ENCODE measurements at regions of chr3 and their contacts with region 1.

Region 1: GRCh38 chr3:175980486-175981415 is 1121.6 kb downstream of the NAALADL2 start:
- DNase-seq: no peak
- H3K4me3 ChIP-seq: no peak overlapping the region
- H3K27ac ChIP-seq: no peak overlapping the region
- H3K4me1 ChIP-seq: no peaks in the 10 kb centered on the region
- H3K27me3 ChIP-seq: no peaks in the 10 kb centered on the region
- CTCF ChIP-seq: no peak

Region 2: GRCh38 chr3:175422744-175423143 is 558.0 kb before region 1 on chr3:
- CTCF ChIA-PET with region 1: interaction called, 10 read pairs
- POLR2A ChIA-PET with region 1: no interaction called
- intact Hi-C with region 1: no loop called
- DNase-seq: no peak
- H3K4me3 ChIP-seq: no peak overlapping the region
- H3K27ac ChIP-seq: no peak overlapping the region
- H3K4me1 ChIP-seq: no peaks in the 10 kb centered on the region
- H3K27me3 ChIP-seq: no peaks in the 10 kb centered on the region
- CTCF ChIP-seq: no peak

Measured in A673 (cell line).